Naive thymus-derived CD4-positive, alpha-beta T cell (primary cell): ENCODE measurements at regions of chr17 and their contacts with region 1.

Region 1: DNA sequence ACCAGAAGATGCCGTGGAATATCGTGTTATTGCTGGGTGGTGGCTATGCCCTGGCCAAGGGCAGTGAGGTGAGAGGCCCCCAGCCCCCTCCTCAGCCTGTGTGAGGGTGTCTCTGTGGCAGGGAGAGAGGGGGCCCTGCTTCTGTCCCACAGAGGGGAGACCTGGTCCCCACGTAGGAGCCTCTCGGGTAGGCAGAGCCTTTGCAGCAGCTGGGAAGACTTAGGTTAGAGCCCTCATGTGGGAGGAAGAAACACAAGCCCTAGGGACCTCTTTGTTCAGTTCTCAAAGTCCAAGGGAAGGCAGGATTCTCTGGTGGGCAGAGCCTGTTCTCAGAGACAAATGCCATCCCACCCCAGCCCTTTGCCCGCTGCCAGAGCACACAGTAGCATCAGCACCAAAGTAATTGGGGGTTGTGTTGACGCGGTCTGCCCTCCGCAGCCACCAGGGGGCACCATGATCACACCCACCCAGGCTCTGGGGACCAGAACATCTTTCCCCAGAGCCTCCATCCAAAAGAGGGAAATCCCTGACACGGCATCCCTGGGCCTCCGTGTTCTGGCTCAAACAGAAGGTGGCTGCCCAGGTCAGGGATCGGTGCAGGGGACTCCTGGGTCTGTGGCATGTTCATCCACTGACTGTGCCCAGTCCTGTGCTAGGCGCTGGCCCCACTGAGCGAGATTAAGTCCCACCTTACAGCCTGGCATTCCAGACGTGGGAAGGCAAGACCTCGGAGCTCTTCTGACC is 11.5 kb upstream of the FOXN1 start:
- DNase-seq: peak; percentile 56 to 85 (median 73)
- ATAC-seq: peak; percentile 90
- H3K4me3 ChIP-seq: no peak overlapping the region
- H3K4me3 Mint-ChIP-seq: no peak overlapping the region
- H3K27ac ChIP-seq: no peak overlapping the region
- H3K27ac Mint-ChIP-seq: no peak overlapping the region
- H3K4me1 ChIP-seq: no peaks in the 10 kb centered on the region
- H3K4me1 Mint-ChIP-seq: peaks cover 0 to 2% (median 0%) of the 10 kb centered on the region in 7 donors
- H3K27me3 ChIP-seq: no peaks in the 10 kb centered on the region
- H3K27me3 Mint-ChIP-seq: no peaks in the 10 kb centered on the region

Region 2: GRCh38 chr17:28540231-28540630 is 45.6 kb after region 1 on chr17:
- CTCF ChIA-PET with region 1: interaction called, 8 read pairs
- POLR2A ChIA-PET with region 1: no interaction called
- intact Hi-C with region 1: loop called (anchors 1 kb)
- DNase-seq: no peak
- ATAC-seq: no peak
- H3K4me3 ChIP-seq: no peak overlapping the region
- H3K4me3 Mint-ChIP-seq: no peak overlapping the region
- H3K27ac ChIP-seq: no peak overlapping the region
- H3K27ac Mint-ChIP-seq: peak overlapping the region in 1 of 9 donors; percentile 13
- H3K4me1 ChIP-seq: no peaks in the 10 kb centered on the region
- H3K4me1 Mint-ChIP-seq: peaks cover 0 to 5% (median 0%) of the 10 kb centered on the region in 7 donors
- H3K27me3 ChIP-seq: no peaks in the 10 kb centered on the region
- H3K27me3 Mint-ChIP-seq: no peaks in the 10 kb centered on the region

Region 3: GRCh38 chr17:28585851-28586250 is 91.2 kb after region 1 on chr17:
- CTCF ChIA-PET with region 1: no interaction called
- POLR2A ChIA-PET with region 1: no interaction called
- intact Hi-C with region 1: loop called in 1 of 2 experiments (anchors 2 kb)
- DNase-seq: no peak
- ATAC-seq: no peak
- H3K4me3 ChIP-seq: no peak overlapping the region
- H3K4me3 Mint-ChIP-seq: no peak overlapping the region
- H3K27ac ChIP-seq: no peak overlapping the region
- H3K27ac Mint-ChIP-seq: no peak overlapping the region
- H3K4me1 ChIP-seq: no peaks in the 10 kb centered on the region
- H3K4me1 Mint-ChIP-seq: peaks cover 0 to 6% (median 3%) of the 10 kb centered on the region in 7 donors
- H3K27me3 ChIP-seq: no peaks in the 10 kb centered on the region
- H3K27me3 Mint-ChIP-seq: no peaks in the 10 kb centered on the region

Region 4: DNA sequence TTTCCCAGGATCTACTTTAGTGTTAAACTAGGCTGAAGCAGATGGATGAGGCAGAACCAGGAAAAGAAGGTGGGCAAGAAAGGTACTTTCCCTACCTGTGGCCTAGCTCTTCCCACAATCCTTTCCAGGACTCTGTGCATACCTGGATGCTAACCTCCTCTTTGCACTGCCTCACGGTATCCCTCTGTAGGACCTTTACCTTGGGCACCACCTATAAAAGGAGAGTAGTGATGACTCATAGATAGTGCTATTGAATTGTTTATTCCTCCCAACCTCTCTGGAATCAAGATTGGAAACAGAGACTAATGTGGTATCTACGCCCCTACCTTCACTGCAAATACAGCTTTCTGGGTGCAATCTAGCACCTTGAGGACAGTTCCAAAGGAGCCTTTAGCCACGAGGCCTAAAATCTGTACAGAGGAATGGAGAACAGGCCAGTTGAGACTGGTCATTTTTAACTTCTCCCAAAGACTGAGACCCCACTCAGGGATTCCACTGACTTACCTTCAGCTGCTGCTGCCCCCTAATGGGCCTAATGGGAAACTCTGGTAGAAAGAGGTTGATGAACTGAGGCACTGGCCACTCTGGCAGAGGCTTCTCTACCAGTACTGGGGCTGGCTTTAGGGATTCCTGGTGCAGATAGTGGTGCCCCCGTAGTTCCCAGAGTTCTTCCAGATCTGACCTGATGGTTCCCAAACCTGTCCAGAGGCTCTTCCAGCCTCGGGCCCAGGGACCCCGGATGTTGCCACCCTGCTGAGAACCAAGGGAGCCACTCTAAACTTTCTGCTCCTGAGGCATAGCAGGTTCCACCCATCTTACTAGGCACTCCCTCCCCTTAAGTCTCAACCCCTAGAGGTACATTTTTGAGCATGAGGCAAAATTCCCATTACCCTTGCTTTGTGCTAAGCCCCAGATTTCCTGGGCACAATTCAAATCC is 118.6 kb after region 1 on chr17:
- CTCF ChIA-PET with region 1: interaction called, 19 read pairs
- POLR2A ChIA-PET with region 1: no interaction called
- intact Hi-C with region 1: loop called in 1 of 2 experiments (anchors 1 kb)
- DNase-seq: peak in 7 of 9 donors; percentile 27 to 45 (median 41)
- ATAC-seq: peak; percentile 70
- H3K4me3 ChIP-seq: no peak overlapping the region
- H3K4me3 Mint-ChIP-seq: no peak overlapping the region
- H3K27ac ChIP-seq: no peak overlapping the region
- H3K27ac Mint-ChIP-seq: peak overlapping the region in 6 of 9 donors; percentile 38 to 75 (median 64)
- H3K4me1 ChIP-seq: no peaks in the 10 kb centered on the region
- H3K4me1 Mint-ChIP-seq: peaks cover 6 to 19% (median 10%) of the 10 kb centered on the region in 7 donors
- H3K27me3 ChIP-seq: no peaks in the 10 kb centered on the region
- H3K27me3 Mint-ChIP-seq: no peaks in the 10 kb centered on the region